ENCODE measurements at regions of chr7 and their contacts with region 1.

Region 1: GRCh38 chr7:70975754-70976153 is 156.2 kb upstream of the GALNT17 start:
- DNase-seq: no peak
- H3K4me3 ChIP-seq: no peak overlapping the region
- H3K4me3 Mint-ChIP-seq: no peak overlapping the region
- H3K27ac ChIP-seq: no peak overlapping the region
- H3K27ac Mint-ChIP-seq: no peak overlapping the region
- H3K4me1 ChIP-seq: no peaks in the 10 kb centered on the region
- H3K4me1 Mint-ChIP-seq: no peaks in the 10 kb centered on the region
- H3K27me3 ChIP-seq: no peaks in the 10 kb centered on the region
- H3K27me3 Mint-ChIP-seq: peaks cover 0 to 2% (median 0%) of the 10 kb centered on the region in 3 donors
- CTCF ChIP-seq: no peak

Region 2: DNA sequence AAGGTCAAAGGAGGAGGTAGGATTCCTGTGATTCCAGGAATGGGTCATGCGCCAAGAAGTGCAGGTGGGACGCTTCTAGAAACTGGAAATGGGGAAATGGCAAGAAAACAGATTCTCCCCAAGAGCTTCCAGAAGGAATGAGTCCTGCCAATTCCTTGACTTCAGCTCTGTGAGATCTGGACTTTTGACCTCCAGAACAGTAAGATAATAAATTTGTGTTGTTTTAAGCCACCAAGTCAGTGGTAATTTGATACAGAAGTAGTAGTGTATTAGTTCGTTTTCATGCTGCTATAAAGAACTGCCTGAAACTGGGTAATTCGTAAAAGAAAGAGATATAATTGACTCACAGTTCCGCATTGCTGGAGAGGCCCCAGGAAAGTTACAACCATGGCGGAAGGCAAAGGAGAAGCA is 22.4 kb before region 1 on chr7:
- intact Hi-C with region 1: loop called in 1 of 2 experiments (anchors 1 kb)
- DNase-seq: no peak
- H3K4me3 ChIP-seq: no peak overlapping the region
- H3K4me3 Mint-ChIP-seq: no peak overlapping the region
- H3K27ac ChIP-seq: no peak overlapping the region
- H3K27ac Mint-ChIP-seq: no peak overlapping the region
- H3K4me1 ChIP-seq: no peaks in the 10 kb centered on the region
- H3K4me1 Mint-ChIP-seq: no peaks in the 10 kb centered on the region
- H3K27me3 ChIP-seq: no peaks in the 10 kb centered on the region
- H3K27me3 Mint-ChIP-seq: peaks cover 0 to 2% (median 0%) of the 10 kb centered on the region in 3 donors
- CTCF ChIP-seq: no peak